ENCODE measurements at regions of chr1 and their contacts with region 1.

Region 1: GRCh38 chr1:172398970-172399755 is 21.3 kb upstream of the C1orf105 start:
- DNase-seq: peak; percentile 84
- H3K4me3 ChIP-seq: no peak overlapping the region
- H3K27ac ChIP-seq: peak overlapping the region; percentile 68
- H3K4me1 ChIP-seq: peaks cover 23% of the 10 kb centered on the region
- H3K27me3 ChIP-seq: no peaks in the 10 kb centered on the region
- CTCF ChIP-seq: peak; percentile 46 to 53

Region 2: GRCh38 chr1:171984850-171985485 is 414.2 kb before region 1 on chr1:
- CTCF ChIA-PET with region 1: no interaction called
- dilution Hi-C with region 1: no loop called
- in situ Hi-C with region 1: loop called in 1 of 2 experiments (anchors 25 kb)
- intact Hi-C with region 1: no loop called
- DNase-seq: no peak
- H3K4me3 ChIP-seq: no peak overlapping the region
- H3K27ac ChIP-seq: no peak overlapping the region
- H3K4me1 ChIP-seq: no peaks in the 10 kb centered on the region
- H3K27me3 ChIP-seq: no peaks in the 10 kb centered on the region
- CTCF ChIP-seq: peak; percentile 80 to 81

Region 3: GRCh38 chr1:172041742-172042141 is 357.4 kb before region 1 on chr1:
- CTCF ChIA-PET with region 1: no interaction called
- dilution Hi-C with region 1: no loop called
- in situ Hi-C with region 1: no loop called
- intact Hi-C with region 1: loop called (anchors 1 kb)
- DNase-seq: no peak
- H3K4me3 ChIP-seq: no peak overlapping the region
- H3K27ac ChIP-seq: no peak overlapping the region
- H3K4me1 ChIP-seq: peaks cover 19% of the 10 kb centered on the region
- H3K27me3 ChIP-seq: no peaks in the 10 kb centered on the region
- CTCF ChIP-seq: peak; percentile 35 to 49

Region 4: GRCh38 chr1:172144445-172145061 is 254.6 kb before region 1 on chr1:
- CTCF ChIA-PET with region 1: no interaction called
- dilution Hi-C with region 1: no loop called
- in situ Hi-C with region 1: no loop called
- intact Hi-C with region 1: loop called (anchors 2 kb)
- DNase-seq: no peak
- H3K4me3 ChIP-seq: no peak overlapping the region
- H3K27ac ChIP-seq: no peak overlapping the region
- H3K4me1 ChIP-seq: peaks cover 29% of the 10 kb centered on the region
- H3K27me3 ChIP-seq: no peaks in the 10 kb centered on the region
- CTCF ChIP-seq: no peak

Region 5: GRCh38 chr1:172286629-172287076 is 112.5 kb before region 1 on chr1:
- CTCF ChIA-PET with region 1: interaction called, 3 read pairs
- dilution Hi-C with region 1: no loop called
- in situ Hi-C with region 1: loop called in 1 of 2 experiments (anchors 25 kb)
- intact Hi-C with region 1: no loop called
- DNase-seq: peak; percentile 84
- H3K4me3 ChIP-seq: no peak overlapping the region
- H3K27ac ChIP-seq: no peak overlapping the region
- H3K4me1 ChIP-seq: peaks cover 11% of the 10 kb centered on the region
- H3K27me3 ChIP-seq: no peaks in the 10 kb centered on the region
- CTCF ChIP-seq: peak in 1 of 2 donors; percentile 36

Region 6: GRCh38 chr1:172357753-172358385 is 41.3 kb before region 1 on chr1:
- CTCF ChIA-PET with region 1: no interaction called
- dilution Hi-C with region 1: no loop called
- in situ Hi-C with region 1: no loop called
- intact Hi-C with region 1: loop called (anchors 1 kb)
- DNase-seq: no peak
- H3K4me3 ChIP-seq: peak overlapping the region in 1 of 3 experiments; percentile 6
- H3K27ac ChIP-seq: peak overlapping the region; percentile 76
- H3K4me1 ChIP-seq: peaks cover 49% of the 10 kb centered on the region
- H3K27me3 ChIP-seq: no peaks in the 10 kb centered on the region
- CTCF ChIP-seq: no peak

Region 7: DNA sequence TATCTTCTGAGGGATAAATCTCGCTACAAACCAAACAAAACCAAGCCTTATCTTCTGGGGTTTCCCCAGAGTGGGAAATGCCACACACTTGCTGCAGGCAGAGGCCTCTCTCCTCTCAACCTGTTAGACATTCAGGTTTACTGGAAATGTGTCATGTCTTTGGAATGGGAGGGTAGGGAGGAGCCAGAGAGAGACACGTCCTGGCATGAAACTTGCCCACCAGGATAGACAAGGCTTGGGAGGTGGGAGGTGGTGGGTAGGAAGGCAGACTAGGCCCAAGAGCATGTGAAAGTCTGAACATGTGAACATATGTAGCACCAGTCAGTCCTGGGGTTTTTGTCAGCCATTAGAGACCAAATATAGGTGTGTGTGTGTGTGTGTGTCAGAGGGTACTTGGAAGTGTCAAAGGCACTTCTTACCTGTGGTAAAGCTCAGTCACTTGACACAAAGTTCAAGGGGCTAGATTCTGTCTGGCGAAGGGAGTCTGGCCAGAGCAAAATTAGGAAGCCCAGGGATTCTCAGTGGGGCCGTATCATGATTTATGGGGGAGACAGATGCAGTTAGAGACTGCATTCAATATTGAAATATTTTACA is 77.2 kb after region 1 on chr1:
- CTCF ChIA-PET with region 1: no interaction called
- dilution Hi-C with region 1: no loop called
- in situ Hi-C with region 1: no loop called
- intact Hi-C with region 1: no loop called
- DNase-seq: peak; percentile 98
- H3K4me3 ChIP-seq: no peak overlapping the region
- H3K27ac ChIP-seq: peak overlapping the region; percentile 77
- H3K4me1 ChIP-seq: peaks cover 40% of the 10 kb centered on the region
- H3K27me3 ChIP-seq: no peaks in the 10 kb centered on the region
- CTCF ChIP-seq: peak in 1 of 2 donors; percentile 11

Measured in mammary epithelial cell (primary cell).